Activated naive CD4-positive, alpha-beta T cell treated with anti-CD3 and anti-CD28 coated beads for 36 hours (primary cell): ENCODE measurements at regions of chr20 and their contacts with region 1.

Region 1: GRCh38 chr20:38805502-38805957 is at the start of gene PPP1R16B:
- DNase-seq: peak; percentile 76
- H3K4me3 Mint-ChIP-seq: peak within 1 kb of the TSS; percentile 85
- H3K27ac Mint-ChIP-seq: peak within 1 kb of the TSS; percentile 96
- H3K4me1 Mint-ChIP-seq: peaks cover 47% of the 10 kb centered on the region
- H3K27me3 Mint-ChIP-seq: no peaks in the 10 kb centered on the region
- total RNA-seq, gene PPP1R16B: 38.1 to 40.0 TPM

Region 2: GRCh38 chr20:38645980-38646858 is 159.3 kb before region 1 on chr20:
- CTCF ChIA-PET with region 1: no interaction called
- intact Hi-C with region 1: loop called (anchors 1 kb)
- DNase-seq: peak; percentile 91
- H3K4me3 Mint-ChIP-seq: peak overlapping the region; percentile 53
- H3K27ac Mint-ChIP-seq: no peak overlapping the region
- H3K4me1 Mint-ChIP-seq: peaks cover 11% of the 10 kb centered on the region
- H3K27me3 Mint-ChIP-seq: peaks cover 26% of the 10 kb centered on the region

Region 3: DNA sequence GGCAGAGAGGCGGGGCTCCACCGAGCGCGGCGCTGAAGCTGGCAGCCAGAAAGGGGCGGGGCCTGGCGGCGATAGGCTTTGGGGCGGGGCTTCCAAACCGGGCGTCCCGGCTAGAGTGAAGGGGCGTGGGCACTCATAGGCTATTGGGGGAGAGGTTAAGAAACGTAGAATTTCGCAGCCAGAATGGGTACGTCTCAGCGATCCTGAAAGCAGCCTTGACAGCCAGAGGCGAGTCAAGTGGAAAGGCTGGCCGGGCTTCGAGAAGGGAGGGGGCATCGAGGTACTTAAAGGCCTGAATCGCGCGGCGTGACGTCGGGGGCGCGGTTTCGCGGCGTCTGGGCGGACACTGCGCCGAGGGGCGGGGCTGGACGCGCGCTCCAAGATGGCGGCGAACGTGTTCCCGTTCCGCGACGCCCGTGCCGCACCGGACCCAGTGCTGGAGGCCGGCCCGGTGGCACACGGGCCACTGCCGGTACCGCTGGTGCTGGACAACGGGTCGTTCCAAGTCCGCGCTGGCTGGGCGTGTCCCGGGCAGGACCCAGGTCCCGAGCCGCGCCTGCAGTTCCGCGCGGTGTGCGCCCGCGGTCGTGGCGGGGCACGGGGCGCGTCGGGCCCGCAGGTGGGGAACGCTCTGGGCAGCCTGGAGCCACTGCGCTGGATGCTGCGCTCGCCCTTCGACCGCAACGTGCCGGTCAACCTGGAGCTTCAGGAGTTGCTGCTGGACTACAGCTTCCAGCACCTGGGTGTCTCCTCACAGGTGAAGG is 57.3 kb before region 1 on chr20 and contains the start of gene ACTR5:
- CTCF ChIA-PET with region 1: interaction called, 12 read pairs
- intact Hi-C with region 1: loop called (anchors 1 kb)
- DNase-seq: peak; percentile 97
- H3K4me3 Mint-ChIP-seq: peak within 1 kb of the TSS; percentile 97
- H3K27ac Mint-ChIP-seq: peak within 1 kb of the TSS; percentile 93
- H3K4me1 Mint-ChIP-seq: peaks cover 15% of the 10 kb centered on the region
- H3K27me3 Mint-ChIP-seq: no peaks in the 10 kb centered on the region
- total RNA-seq, gene ACTR5: 8.3 to 9.4 TPM

Region 4: GRCh38 chr20:38833857-38834164 is 28.3 kb after region 1 on chr20:
- CTCF ChIA-PET with region 1: interaction called, 5 read pairs
- intact Hi-C with region 1: loop called (anchors 2 kb)
- DNase-seq: peak; percentile 50
- H3K4me3 Mint-ChIP-seq: no peak overlapping the region
- H3K27ac Mint-ChIP-seq: peak overlapping the region; percentile 73
- H3K4me1 Mint-ChIP-seq: peaks cover 60% of the 10 kb centered on the region
- H3K27me3 Mint-ChIP-seq: no peaks in the 10 kb centered on the region

Region 5: DNA sequence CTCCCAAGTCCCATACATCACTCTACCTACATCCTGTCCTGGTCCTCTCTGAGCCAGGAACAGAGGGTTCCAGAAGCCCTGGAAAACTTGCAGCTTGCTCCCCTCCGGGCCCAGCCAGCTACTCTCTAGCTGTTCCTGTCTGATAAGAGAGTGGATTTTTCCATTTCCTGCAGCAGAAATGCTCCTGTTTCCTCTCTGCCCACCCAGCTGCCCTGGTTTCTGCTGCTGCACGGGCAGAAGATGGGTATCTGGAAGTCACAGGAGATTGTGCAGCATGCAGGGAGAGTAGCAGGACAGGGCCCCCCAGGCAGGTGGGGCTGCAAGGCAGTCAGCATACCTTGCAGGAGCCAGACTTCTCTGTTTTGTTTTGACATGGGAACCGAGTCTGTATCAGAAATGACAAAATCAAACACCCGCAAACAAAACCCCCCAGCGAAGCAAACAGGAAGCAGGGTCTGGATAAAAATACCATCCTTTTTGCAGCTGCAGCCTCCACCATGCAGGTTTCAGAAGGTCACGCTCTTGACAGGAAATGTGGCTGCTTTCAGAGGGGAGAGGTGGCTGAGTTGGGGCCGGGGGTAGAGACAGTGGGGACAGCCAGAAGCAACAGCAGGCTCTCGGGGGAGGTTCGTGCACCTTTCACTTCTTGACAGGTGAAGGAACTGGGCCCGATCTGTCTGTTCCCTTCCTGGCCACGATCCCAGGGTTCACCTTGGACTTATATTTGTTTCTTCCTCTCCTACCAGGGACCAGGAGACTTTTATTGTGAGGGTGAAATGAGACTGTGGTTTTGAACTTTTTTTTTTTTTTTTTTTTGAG is 69.9 kb after region 1 on chr20:
- CTCF ChIA-PET with region 1: interaction called, 7 read pairs
- intact Hi-C with region 1: loop called (anchors 1 kb)
- DNase-seq: peak; percentile 60
- H3K4me3 Mint-ChIP-seq: peak overlapping the region; percentile 34
- H3K27ac Mint-ChIP-seq: peak overlapping the region; percentile 91
- H3K4me1 Mint-ChIP-seq: peaks cover 71% of the 10 kb centered on the region
- H3K27me3 Mint-ChIP-seq: no peaks in the 10 kb centered on the region

Region 6: DNA sequence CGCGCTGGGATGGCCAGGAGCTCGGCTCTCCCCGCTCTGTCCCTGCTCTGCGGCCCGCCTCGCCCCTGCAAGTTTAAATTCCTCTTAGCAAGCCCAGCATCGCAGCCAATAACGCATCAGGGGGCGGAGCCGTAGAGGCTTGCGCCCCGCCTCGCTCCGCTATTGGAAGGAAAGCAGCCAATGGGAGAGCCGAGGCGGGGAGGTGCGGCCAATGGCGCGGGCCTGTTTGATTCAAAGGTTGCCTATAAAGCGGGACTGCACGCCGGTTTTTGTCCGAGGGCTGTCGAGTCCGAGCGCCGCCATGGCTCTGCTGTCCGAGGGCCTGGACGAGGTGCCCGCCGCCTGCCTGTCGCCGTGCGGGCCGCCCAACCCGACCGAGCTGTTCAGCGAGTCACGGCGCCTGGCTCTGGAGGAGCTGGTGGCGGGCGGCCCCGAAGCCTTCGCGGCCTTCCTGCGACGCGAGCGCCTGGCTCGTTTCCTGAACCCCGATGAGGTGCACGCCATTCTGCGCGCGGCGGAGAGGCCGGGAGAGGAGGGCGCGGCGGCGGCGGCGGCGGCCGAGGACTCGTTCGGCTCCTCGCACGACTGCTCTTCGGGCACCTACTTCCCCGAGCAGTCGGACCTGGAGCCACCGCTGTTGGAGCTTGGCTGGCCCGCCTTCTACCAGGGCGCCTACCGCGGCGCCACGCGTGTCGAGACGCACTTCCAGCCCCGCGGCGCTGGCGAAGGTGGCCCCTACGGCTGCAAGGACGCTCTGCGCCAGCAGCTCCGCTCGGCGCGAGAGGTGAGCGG is 120.8 kb after region 1 on chr20 and contains the start of gene FAM83D:
- CTCF ChIA-PET with region 1: interaction called, 4 read pairs
- intact Hi-C with region 1: loop called (anchors 1 kb)
- DNase-seq: peak; percentile 97
- H3K4me3 Mint-ChIP-seq: peak within 1 kb of the TSS; percentile 80
- H3K27ac Mint-ChIP-seq: peak within 1 kb of the TSS; percentile 30
- H3K4me1 Mint-ChIP-seq: peaks cover 17% of the 10 kb centered on the region
- H3K27me3 Mint-ChIP-seq: no peaks in the 10 kb centered on the region
- total RNA-seq, gene FAM83D: 13.6 TPM

Region 7: DNA sequence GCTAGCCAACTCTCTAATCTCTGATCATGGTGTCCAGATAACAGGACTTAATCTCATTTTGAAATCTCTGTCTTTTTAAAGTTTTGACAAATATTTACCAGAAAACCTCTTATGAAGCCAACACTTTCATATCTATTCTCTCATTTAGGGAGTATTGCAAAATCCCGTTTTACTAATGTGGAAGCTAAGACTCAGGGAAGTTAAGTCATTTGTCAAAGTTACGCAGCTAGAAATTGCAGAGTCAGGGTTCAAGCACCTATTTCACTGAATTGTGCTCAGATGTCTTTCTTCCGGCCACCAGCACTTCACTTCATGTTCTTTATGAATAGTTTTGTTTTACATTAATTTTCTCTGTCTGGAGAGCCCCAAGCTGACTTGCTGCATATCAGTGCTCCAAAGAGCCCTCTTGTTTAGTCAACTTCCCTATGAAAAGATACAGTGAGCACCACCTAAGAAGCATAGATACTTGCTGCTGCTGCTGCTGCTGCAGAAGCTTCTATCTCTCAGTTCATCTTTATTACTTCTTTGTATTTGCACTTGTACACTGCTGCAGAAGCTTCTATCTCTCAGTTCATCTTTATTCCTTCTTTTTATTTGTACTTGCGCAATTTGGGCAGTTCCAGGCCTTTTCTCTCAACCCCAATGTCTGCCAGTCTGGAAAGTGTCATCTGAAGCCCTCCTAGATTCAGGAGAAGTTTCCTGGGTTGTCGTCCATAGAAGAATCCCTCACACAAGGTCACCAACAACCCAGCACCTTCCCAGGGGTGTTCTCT is 1553.8 kb after region 1 on chr20:
- CTCF ChIA-PET with region 1: no interaction called
- intact Hi-C with region 1: no loop called
- DNase-seq: no peak
- H3K4me3 Mint-ChIP-seq: no peak overlapping the region
- H3K27ac Mint-ChIP-seq: no peak overlapping the region
- H3K4me1 Mint-ChIP-seq: no peaks in the 10 kb centered on the region
- H3K27me3 Mint-ChIP-seq: no peaks in the 10 kb centered on the region